ENCODE measurements at regions of chr14 and their contacts with region 1.

Region 1: DNA sequence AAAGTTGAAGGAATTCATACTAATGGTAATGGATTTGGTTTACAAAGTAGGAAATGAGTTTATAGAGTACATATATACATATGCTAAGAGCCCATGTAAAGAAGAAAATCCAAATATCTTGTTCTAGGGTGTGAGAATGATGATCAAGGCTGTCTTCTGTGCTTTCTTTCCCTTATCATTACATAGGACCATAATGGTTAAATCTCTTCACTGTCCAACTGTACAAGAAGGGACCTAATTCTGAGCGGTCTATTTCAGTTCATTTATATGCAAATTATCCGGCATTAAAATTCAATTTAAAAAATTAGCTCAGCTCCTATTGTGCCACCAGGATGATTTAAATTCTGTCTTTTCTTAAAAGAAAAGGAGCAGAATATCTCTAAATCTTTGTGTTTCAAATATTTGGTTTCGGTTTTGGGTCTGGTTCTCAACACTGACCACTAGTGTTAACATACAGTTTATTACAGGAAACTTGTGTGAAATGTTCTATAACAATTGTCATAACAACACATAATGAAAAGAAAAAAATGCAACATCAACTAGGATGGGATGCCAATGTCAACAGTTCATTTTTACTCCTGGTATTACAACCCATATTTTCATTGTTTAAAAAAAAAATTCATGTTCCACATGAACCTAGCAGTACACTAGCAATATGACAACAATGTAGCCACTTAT is 16.8 kb downstream of the OR4K1 start:
- DNase-seq: no peak
- H3K4me3 ChIP-seq: no peak overlapping the region
- H3K27ac ChIP-seq: no peak overlapping the region
- H3K4me1 ChIP-seq: no peaks in the 10 kb centered on the region
- CTCF ChIP-seq: peak; percentile 60

Region 2: DNA sequence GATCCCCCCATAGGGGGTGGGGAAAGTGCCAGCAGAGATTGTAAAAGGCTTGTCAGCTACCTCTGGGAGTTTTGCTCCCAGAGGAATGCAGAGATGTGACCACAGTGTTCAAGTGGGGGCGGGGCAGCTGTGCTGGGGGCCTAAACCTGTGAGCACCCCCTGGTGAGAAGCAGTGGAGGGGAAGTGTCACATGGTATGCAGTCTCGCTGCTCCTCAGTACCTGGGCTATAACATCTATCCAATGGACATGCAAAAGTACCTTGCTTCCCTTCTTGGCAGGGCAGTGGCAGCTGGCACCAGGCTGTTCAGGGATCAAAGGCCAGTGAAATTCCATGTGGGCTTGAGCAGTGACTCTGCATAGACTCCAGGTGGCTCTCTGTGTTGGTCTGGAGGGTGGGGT is 52.3 kb before region 1 on chr14:
- CTCF ChIA-PET with region 1: no interaction called
- POLR2A ChIA-PET with region 1: no interaction called
- intact Hi-C with region 1: loop called (anchors 10 kb)
- DNase-seq: no peak
- H3K4me3 ChIP-seq: no peak overlapping the region
- H3K27ac ChIP-seq: no peak overlapping the region
- H3K4me1 ChIP-seq: no peaks in the 10 kb centered on the region
- CTCF ChIP-seq: no peak

Region 3: GRCh38 chr14:20044243-20044642 is 96.7 kb after region 1 on chr14:
- CTCF ChIA-PET with region 1: no interaction called
- POLR2A ChIA-PET with region 1: no interaction called
- intact Hi-C with region 1: no loop called
- DNase-seq: no peak
- H3K4me3 ChIP-seq: no peak overlapping the region
- H3K27ac ChIP-seq: no peak overlapping the region
- H3K4me1 ChIP-seq: no peaks in the 10 kb centered on the region
- CTCF ChIP-seq: no peak